MCF 10A (cell line): ENCODE measurements at regions of chr20 and their contacts with region 1.

Region 1: DNA sequence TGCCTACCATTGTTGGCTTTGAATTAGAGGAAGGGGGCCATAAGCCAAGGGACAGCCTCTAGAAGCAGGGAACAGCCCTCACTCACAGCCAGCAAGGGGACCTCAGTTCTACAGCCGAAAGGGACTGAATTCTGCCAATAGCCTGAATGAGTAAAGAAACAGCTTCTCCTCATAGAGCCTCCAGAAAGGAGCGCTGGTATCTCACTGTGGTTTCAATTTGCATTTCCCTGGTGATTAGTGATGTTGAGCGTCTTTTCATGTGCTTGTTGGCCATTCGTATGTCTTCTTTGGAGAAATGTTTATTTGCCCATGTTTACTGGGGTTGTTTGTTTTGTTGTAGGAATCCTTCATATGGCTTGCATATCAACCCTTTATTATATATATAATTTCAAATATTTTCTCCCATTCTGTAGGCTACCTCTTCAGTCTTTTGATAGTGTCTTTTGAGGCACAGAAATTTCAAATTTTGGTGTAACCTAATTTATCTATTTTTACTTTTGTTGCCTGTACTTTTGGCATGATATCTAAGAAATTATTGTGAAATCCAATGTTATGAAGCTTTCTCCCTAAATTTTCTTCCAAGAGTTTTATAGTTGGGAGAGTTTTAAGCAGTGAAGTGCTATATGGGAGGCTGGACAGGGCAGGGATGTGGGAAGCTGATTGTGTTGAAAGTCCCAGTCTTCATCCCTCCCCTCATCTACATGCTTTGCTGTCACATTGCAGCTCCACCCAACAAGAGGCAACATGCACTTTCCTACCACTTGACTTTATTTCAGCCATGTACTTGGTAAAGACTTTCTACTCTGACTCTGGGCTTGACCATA is 82.3 kb upstream of the SHLD1 start:
- DNase-seq: no peak
- H3K4me3 Mint-ChIP-seq: no peak overlapping the region
- H3K27ac Mint-ChIP-seq: peak overlapping the region; percentile 1
- H3K4me1 Mint-ChIP-seq: peaks cover 12% of the 10 kb centered on the region
- H3K27me3 Mint-ChIP-seq: no peaks in the 10 kb centered on the region
- CTCF ChIP-seq: no peak

Region 2: DNA sequence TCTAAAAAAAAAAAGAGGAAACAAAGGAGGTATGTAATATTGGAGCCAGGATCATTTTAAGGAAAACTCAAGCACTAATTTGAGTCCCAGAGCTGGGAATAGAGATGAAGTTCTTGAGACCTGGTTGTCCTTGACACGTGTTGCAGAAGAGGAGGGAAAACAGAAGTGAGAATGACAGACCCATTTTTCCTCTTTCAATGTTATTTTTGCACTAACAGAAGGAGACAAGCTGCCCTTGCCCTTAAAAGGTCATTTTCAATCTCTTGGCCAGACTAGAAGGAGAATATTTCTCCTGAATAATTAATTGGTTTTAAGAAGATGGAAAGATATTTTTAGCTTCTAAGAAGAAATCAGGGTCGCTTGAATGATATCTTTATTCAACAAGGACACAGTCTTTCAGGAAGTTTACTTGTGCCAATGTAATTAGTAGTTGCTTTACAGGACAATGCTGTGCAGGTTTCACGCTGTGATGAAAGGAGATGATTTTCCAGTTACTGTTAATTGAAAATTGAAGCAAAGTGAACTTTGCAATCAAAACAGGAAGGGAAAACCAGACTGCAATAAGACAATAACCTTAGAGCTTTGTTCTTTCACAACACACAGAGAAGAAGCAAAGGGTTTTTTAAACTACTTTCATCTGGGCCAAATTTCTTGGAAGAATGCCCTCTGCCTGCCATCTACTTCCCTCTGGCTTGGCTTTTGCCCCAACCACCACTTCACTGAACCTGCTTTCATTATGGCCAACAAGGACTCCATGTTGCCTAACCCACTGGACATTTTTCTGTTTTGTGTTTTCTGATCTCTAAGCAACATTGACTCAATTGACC is 25.5 kb before region 1 on chr20:
- CTCF ChIA-PET with region 1: interaction called, 7 read pairs
- POLR2A ChIA-PET with region 1: interaction called, 30 read pairs
- intact Hi-C with region 1: no loop called
- DNase-seq: peak; percentile 78
- H3K4me3 Mint-ChIP-seq: no peak overlapping the region
- H3K27ac Mint-ChIP-seq: peak overlapping the region; percentile 64
- H3K4me1 Mint-ChIP-seq: peaks cover 12% of the 10 kb centered on the region
- H3K27me3 Mint-ChIP-seq: no peaks in the 10 kb centered on the region
- CTCF ChIP-seq: no peak

Region 3: GRCh38 chr20:5680192-5680591 is 12.3 kb after region 1 on chr20:
- CTCF ChIA-PET with region 1: interaction called, 4 read pairs
- POLR2A ChIA-PET with region 1: interaction called, 23 read pairs
- intact Hi-C with region 1: no loop called
- DNase-seq: no peak
- H3K4me3 Mint-ChIP-seq: no peak overlapping the region
- H3K27ac Mint-ChIP-seq: peak overlapping the region; percentile 46
- H3K4me1 Mint-ChIP-seq: peaks cover 8% of the 10 kb centered on the region
- H3K27me3 Mint-ChIP-seq: no peaks in the 10 kb centered on the region
- CTCF ChIP-seq: no peak

Region 4: DNA sequence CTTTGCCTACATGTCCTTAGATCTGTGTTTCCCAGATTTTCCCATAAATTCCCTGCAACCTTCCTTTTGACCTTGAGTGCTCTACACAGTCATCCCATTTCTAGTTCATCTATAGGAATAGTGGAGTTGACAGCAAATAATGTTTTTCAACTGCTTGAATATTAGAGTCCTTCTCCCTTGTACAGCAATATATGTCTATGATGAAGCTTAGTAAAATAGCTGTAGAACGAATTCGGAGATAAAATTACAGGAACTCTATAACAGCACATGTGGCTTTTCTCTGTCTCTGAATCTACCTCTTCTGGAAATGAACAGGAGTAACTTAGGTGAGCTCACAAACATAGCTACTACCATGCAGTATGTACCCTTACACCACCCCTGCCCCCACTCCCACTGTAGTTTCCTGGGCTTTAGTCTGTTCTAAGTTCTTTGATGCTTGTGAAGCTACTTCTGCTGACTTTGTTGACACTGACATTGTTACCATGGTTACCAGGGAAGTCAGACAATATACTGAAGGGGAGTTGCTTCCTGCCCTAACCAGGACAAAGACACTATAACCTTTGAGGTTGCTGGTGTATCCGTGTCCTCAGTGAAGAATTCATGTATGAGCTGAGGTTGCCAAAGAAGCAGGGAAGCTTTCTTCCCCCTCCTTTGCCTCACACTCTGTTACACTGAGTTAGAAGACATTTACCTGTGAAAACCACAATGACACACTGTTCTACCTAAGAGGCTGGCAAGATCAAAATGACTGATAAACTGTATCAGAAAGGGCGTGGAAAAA is 46.5 kb after region 1 on chr20:
- CTCF ChIA-PET with region 1: interaction called, 4 read pairs
- POLR2A ChIA-PET with region 1: interaction called, 10 read pairs
- intact Hi-C with region 1: no loop called
- DNase-seq: no peak
- H3K4me3 Mint-ChIP-seq: no peak overlapping the region
- H3K27ac Mint-ChIP-seq: peak overlapping the region; percentile 69
- H3K4me1 Mint-ChIP-seq: peaks cover 17% of the 10 kb centered on the region
- H3K27me3 Mint-ChIP-seq: peaks cover 12% of the 10 kb centered on the region
- CTCF ChIP-seq: no peak

Region 5: DNA sequence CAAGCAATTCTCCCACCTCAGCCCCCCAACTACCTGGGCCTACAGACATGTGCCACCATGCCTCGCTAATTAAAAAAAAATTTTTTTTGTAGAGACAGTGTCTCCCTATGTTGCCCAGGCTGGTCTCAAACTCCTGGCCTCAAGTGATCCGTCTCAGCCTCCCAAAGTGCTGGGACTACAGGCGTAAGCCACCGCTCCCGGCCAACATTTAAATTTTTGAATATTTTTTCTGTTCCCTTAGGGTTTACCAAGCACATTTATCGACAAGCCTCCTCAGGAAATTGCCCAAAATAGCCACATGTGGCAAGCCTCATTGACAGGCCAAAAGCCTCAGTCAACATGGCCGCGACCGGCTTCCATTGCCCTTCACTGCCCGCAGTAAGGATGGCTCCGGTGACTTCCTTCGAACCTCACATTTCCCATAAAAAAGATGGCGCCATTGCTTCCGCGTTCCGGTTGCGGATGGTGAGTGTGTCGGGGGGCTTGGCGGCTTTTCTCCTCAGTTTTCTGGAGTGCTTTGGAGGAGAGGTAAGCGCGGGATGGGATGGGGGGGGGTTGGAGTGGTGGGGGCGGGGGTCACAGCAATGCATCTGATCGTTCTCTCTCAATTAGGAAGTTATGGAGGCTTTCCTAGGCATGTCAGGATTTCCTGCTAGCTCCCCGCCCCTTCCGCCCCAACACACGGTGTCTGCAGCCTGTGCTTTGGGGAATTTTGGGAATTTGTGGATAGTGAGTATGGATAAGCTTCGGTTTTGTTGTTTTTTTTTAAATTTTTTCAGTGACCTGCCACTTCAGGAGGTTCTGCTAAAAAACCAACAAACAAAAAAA is 82.2 kb after region 1 on chr20 and contains the start of gene SHLD1:
- CTCF ChIA-PET with region 1: interaction called, 3 read pairs
- POLR2A ChIA-PET with region 1: interaction called, 19 read pairs
- intact Hi-C with region 1: no loop called
- DNase-seq: peak; percentile 85
- H3K4me3 Mint-ChIP-seq: peak within 1 kb of the TSS; percentile 78
- H3K27ac Mint-ChIP-seq: peak within 1 kb of the TSS; percentile 95
- H3K4me1 Mint-ChIP-seq: peaks cover 3% of the 10 kb centered on the region
- H3K27me3 Mint-ChIP-seq: no peaks in the 10 kb centered on the region
- CTCF ChIP-seq: no peak
- total RNA-seq, gene SHLD1: 2.3 and 3.3 TPM in 2 replicates

Region 6: GRCh38 chr20:6008254-6008653 is 340.3 kb after region 1 on chr20:
- CTCF ChIA-PET with region 1: no interaction called
- POLR2A ChIA-PET with region 1: interaction called, 10 read pairs
- intact Hi-C with region 1: no loop called
- DNase-seq: peak; percentile 99
- H3K4me3 Mint-ChIP-seq: peak overlapping the region; percentile 76
- H3K27ac Mint-ChIP-seq: peak overlapping the region; percentile 83
- H3K4me1 Mint-ChIP-seq: peaks cover 21% of the 10 kb centered on the region
- H3K27me3 Mint-ChIP-seq: no peaks in the 10 kb centered on the region
- CTCF ChIP-seq: no peak